ENCODE measurements at regions of chr15 and their contacts with region 1.

Region 1: GRCh38 chr15:71443538-71443937 is 328.3 kb downstream of the THSD4 start:
- DNase-seq: peak in 12 of 14 experiments; percentile 2 to 40 (median 21)
- ATAC-seq: no peak
- H3K4me3 ChIP-seq: no peak overlapping the region
- H3K4me3 Mint-ChIP-seq: no peak overlapping the region
- H3K27ac ChIP-seq: no peak overlapping the region
- H3K27ac Mint-ChIP-seq: no peak overlapping the region
- H3K4me1 ChIP-seq: no peaks in the 10 kb centered on the region
- H3K4me1 Mint-ChIP-seq: no peaks in the 10 kb centered on the region
- H3K27me3 ChIP-seq: peaks cover 0 to 6% of the 10 kb centered on the region in 2 experiments
- H3K27me3 Mint-ChIP-seq: peaks cover 25% of the 10 kb centered on the region
- CTCF ChIP-seq: peak; percentile 70

Region 2: GRCh38 chr15:70679919-70680231 is 763.7 kb before region 1 on chr15:
- CTCF ChIA-PET with region 1: no interaction called
- POLR2A ChIA-PET with region 1: no interaction called
- intact Hi-C with region 1: loop called (anchors 5 to 10 kb)
- DNase-seq: no peak
- ATAC-seq: no peak
- H3K4me3 ChIP-seq: no peak overlapping the region
- H3K4me3 Mint-ChIP-seq: no peak overlapping the region
- H3K27ac ChIP-seq: no peak overlapping the region
- H3K27ac Mint-ChIP-seq: no peak overlapping the region
- H3K4me1 ChIP-seq: no peaks in the 10 kb centered on the region
- H3K4me1 Mint-ChIP-seq: peaks cover 4% of the 10 kb centered on the region
- H3K27me3 ChIP-seq: peaks cover 0 to 3% of the 10 kb centered on the region in 2 experiments
- H3K27me3 Mint-ChIP-seq: peaks cover 19% of the 10 kb centered on the region
- CTCF ChIP-seq: peak; percentile 34

Region 3: DNA sequence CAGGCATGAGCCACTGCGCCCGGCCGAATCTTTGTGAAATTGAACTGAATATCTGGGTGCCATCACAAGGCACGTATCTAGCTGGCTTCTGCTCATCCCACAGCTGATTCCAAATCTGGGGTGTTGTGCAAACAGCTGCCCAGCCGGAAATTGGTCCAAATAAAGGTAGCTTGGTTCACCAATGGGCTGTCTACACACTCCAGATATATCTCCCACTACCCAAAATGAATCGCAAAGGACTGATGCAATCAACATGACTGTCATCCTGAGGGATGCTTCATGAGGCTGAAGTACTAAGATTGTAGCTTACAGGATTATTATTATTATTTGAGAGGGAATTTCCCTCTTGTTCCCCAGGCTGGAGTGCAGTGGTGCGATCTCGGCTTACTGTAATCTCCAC is 617.7 kb before region 1 on chr15:
- CTCF ChIA-PET with region 1: interaction called, 3 read pairs
- POLR2A ChIA-PET with region 1: no interaction called
- intact Hi-C with region 1: loop called in 1 of 2 experiments (anchors 2 kb)
- DNase-seq: no peak
- ATAC-seq: no peak
- H3K4me3 ChIP-seq: no peak overlapping the region
- H3K4me3 Mint-ChIP-seq: no peak overlapping the region
- H3K27ac ChIP-seq: no peak overlapping the region
- H3K27ac Mint-ChIP-seq: no peak overlapping the region
- H3K4me1 ChIP-seq: no peaks in the 10 kb centered on the region
- H3K4me1 Mint-ChIP-seq: no peaks in the 10 kb centered on the region
- H3K27me3 ChIP-seq: no peaks in the 10 kb centered on the region
- H3K27me3 Mint-ChIP-seq: peaks cover 28% of the 10 kb centered on the region
- CTCF ChIP-seq: no peak

Region 4: GRCh38 chr15:71114896-71115554 is 328.5 kb before region 1 on chr15 and contains the start of gene THSD4:
- CTCF ChIA-PET with region 1: no interaction called
- POLR2A ChIA-PET with region 1: no interaction called
- intact Hi-C with region 1: loop called (anchors 2 kb)
- DNase-seq: peak; percentile 5 to 71 (median 40)
- ATAC-seq: peak; percentile 70
- H3K4me3 ChIP-seq: no peak within 1 kb of the TSS
- H3K4me3 Mint-ChIP-seq: peak within 1 kb of the TSS; percentile 66
- H3K27ac ChIP-seq: no peak within 1 kb of the TSS
- H3K27ac Mint-ChIP-seq: no peak within 1 kb of the TSS
- H3K4me1 ChIP-seq: peaks cover 11% of the 10 kb centered on the region
- H3K4me1 Mint-ChIP-seq: peaks cover 8% of the 10 kb centered on the region
- H3K27me3 ChIP-seq: peaks cover 21 to 37% of the 10 kb centered on the region in 2 experiments
- H3K27me3 Mint-ChIP-seq: peaks cover 70% of the 10 kb centered on the region
- CTCF ChIP-seq: peak; percentile 68
- total RNA-seq, gene THSD4: not detected

Region 5: DNA sequence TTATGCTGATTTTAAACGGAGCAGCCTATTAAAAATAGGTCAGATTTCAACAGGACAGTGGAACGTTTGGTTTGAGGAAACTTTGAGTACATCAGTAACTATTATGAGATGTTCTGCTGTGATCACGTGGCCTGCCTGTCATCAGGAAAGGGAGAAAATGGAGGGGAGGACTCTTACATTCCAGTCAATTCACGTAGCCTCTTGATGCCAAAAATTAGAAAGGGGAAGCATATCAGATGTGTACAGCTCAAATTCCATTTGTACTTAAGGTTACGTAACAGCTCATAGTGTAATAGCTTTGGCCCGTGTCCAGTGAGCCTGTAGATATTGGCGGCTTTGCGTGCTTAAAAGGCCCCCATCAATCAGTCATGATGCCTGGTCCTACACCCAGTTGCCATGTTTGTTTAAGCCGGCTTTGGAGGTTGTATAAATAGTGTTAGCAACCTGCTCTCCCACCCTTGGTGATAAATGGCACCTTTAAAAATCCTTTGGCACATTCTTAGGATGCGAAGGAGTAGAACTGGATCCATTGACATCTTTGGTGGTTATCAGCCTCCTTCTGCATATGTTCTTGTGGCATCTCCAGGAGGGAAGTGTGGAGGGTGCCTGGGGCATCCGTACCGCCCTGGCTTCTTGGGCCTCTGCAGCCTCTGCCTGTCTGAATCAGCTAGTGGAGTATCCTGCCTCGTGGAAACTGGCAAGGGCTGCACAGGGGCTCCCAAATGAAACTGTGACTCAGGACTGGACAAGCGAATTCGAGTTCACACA is 164.4 kb before region 1 on chr15:
- CTCF ChIA-PET with region 1: no interaction called
- POLR2A ChIA-PET with region 1: no interaction called
- intact Hi-C with region 1: no loop called
- DNase-seq: no peak
- ATAC-seq: no peak
- H3K4me3 ChIP-seq: no peak overlapping the region
- H3K4me3 Mint-ChIP-seq: no peak overlapping the region
- H3K27ac ChIP-seq: no peak overlapping the region
- H3K27ac Mint-ChIP-seq: no peak overlapping the region
- H3K4me1 ChIP-seq: no peaks in the 10 kb centered on the region
- H3K4me1 Mint-ChIP-seq: no peaks in the 10 kb centered on the region
- H3K27me3 ChIP-seq: no peaks in the 10 kb centered on the region
- H3K27me3 Mint-ChIP-seq: peaks cover 17% of the 10 kb centered on the region
- CTCF ChIP-seq: no peak

Region 6: GRCh38 chr15:71386448-71387236 is 56.9 kb before region 1 on chr15:
- CTCF ChIA-PET with region 1: interaction called, 4 read pairs
- POLR2A ChIA-PET with region 1: interaction called, 3 read pairs
- intact Hi-C with region 1: loop called in 1 of 2 experiments (anchors 2 kb)
- DNase-seq: peak in 3 of 14 experiments; percentile 15 to 35 (median 33)
- ATAC-seq: no peak
- H3K4me3 ChIP-seq: no peak overlapping the region
- H3K4me3 Mint-ChIP-seq: no peak overlapping the region
- H3K27ac ChIP-seq: no peak overlapping the region
- H3K27ac Mint-ChIP-seq: no peak overlapping the region
- H3K4me1 ChIP-seq: no peaks in the 10 kb centered on the region
- H3K4me1 Mint-ChIP-seq: peaks cover 11% of the 10 kb centered on the region
- H3K27me3 ChIP-seq: peaks cover 0 to 5% of the 10 kb centered on the region in 2 experiments
- H3K27me3 Mint-ChIP-seq: peaks cover 28% of the 10 kb centered on the region
- CTCF ChIP-seq: peak; percentile 19

Region 7: GRCh38 chr15:71471347-71471746 is 27.8 kb after region 1 on chr15:
- CTCF ChIA-PET with region 1: no interaction called
- POLR2A ChIA-PET with region 1: no interaction called
- intact Hi-C with region 1: no loop called
- DNase-seq: no peak
- ATAC-seq: no peak
- H3K4me3 ChIP-seq: no peak overlapping the region
- H3K4me3 Mint-ChIP-seq: no peak overlapping the region
- H3K27ac ChIP-seq: no peak overlapping the region
- H3K27ac Mint-ChIP-seq: no peak overlapping the region
- H3K4me1 ChIP-seq: no peaks in the 10 kb centered on the region
- H3K4me1 Mint-ChIP-seq: no peaks in the 10 kb centered on the region
- H3K27me3 ChIP-seq: no peaks in the 10 kb centered on the region
- H3K27me3 Mint-ChIP-seq: no peaks in the 10 kb centered on the region
- CTCF ChIP-seq: no peak

Region 8: DNA sequence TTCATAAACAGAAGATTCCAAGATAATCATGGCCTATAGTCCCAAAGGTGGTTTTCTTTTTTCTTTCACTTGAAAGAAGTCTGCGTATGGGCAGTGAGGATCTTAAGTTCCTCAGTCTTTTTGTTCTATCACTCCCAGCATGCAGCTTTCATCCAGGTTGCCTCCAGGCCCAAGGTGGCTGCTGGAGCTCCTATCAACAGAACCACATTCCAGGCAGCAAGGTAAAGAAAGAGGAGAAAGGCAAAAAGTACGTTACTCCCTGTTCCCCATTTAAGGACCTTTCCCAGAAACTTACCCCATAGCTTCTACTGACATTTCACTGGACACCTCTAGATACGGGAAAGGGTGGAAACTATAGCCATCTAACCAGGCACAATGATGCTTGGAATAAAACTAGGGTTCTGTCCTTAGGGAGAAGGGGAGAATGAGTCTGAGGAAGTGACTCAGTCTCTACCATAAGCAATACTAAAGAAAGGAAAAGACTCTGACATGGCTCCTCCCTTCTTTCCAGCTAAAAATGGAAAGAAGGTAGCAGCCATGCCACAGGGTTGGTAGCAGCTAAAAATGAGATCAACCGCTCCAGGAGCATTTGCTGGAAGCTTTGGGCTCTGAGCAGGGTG is 52.9 kb after region 1 on chr15:
- CTCF ChIA-PET with region 1: no interaction called
- POLR2A ChIA-PET with region 1: no interaction called
- intact Hi-C with region 1: no loop called
- DNase-seq: no peak
- ATAC-seq: no peak
- H3K4me3 ChIP-seq: no peak overlapping the region
- H3K4me3 Mint-ChIP-seq: no peak overlapping the region
- H3K27ac ChIP-seq: no peak overlapping the region
- H3K27ac Mint-ChIP-seq: no peak overlapping the region
- H3K4me1 ChIP-seq: no peaks in the 10 kb centered on the region
- H3K4me1 Mint-ChIP-seq: no peaks in the 10 kb centered on the region
- H3K27me3 ChIP-seq: peaks cover 2 to 7% of the 10 kb centered on the region in 2 experiments
- H3K27me3 Mint-ChIP-seq: peaks cover 38% of the 10 kb centered on the region
- CTCF ChIP-seq: no peak

Region 9: DNA sequence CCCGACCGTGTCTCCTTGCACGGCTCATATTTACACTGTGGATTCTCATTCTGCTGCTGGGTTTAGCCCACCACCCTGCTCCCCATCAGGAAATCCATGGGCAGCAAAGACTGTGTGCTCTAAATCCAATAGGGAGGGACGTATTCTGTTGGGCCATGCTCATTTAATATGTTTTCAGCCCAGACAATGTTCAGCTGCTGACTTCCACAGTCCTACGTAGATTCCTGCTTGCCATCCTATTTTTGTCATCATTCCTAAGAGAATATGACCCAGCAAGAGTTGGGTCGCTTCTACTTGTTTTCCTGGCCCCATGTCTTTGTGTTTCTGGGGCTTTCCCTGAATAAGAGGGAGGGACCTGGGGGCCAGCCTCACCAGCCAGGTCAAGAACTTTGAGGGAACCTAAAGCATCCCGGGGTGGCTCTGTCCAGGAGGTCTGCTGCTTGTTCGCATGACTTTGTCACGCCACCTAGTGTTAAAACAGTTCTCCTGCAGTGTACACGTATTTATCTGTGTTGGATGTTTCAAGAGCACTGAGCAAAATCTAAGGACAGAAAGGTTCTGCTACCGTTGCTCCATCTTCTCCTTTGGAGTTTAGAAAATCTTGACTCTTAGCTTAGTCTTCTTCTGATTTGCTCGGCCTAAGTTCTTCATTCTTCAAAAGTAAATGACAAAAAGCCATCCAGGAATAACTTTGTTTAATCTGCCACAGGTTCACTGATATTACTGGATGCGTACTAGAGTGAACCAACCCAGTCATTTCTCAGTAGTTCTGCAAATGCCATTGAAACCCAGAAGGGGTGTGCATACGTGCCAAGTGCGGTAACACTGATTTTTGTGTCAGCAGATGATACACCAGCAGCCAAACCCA is 287.0 kb after region 1 on chr15:
- CTCF ChIA-PET with region 1: no interaction called
- POLR2A ChIA-PET with region 1: no interaction called
- intact Hi-C with region 1: loop called in 1 of 2 experiments (anchors 2 kb)
- DNase-seq: peak in 4 of 14 experiments; percentile 14 to 54 (median 40)
- ATAC-seq: no peak
- H3K4me3 ChIP-seq: no peak overlapping the region
- H3K4me3 Mint-ChIP-seq: no peak overlapping the region
- H3K27ac ChIP-seq: no peak overlapping the region
- H3K27ac Mint-ChIP-seq: no peak overlapping the region
- H3K4me1 ChIP-seq: no peaks in the 10 kb centered on the region
- H3K4me1 Mint-ChIP-seq: no peaks in the 10 kb centered on the region
- H3K27me3 ChIP-seq: peaks cover 0 to 10% of the 10 kb centered on the region in 2 experiments
- H3K27me3 Mint-ChIP-seq: peaks cover 28% of the 10 kb centered on the region
- CTCF ChIP-seq: peak; percentile 72